ENCODE measurements at regions of chr6 and their contacts with region 1.

Region 1: GRCh38 chr6:5813625-5814027 is 193.1 kb downstream of the NRN1 start:
- DNase-seq: peak; percentile 36
- H3K4me3 Mint-ChIP-seq: no peak overlapping the region
- H3K27ac Mint-ChIP-seq: no peak overlapping the region
- H3K4me1 Mint-ChIP-seq: peaks cover 29% of the 10 kb centered on the region
- H3K27me3 Mint-ChIP-seq: no peaks in the 10 kb centered on the region

Region 2: DNA sequence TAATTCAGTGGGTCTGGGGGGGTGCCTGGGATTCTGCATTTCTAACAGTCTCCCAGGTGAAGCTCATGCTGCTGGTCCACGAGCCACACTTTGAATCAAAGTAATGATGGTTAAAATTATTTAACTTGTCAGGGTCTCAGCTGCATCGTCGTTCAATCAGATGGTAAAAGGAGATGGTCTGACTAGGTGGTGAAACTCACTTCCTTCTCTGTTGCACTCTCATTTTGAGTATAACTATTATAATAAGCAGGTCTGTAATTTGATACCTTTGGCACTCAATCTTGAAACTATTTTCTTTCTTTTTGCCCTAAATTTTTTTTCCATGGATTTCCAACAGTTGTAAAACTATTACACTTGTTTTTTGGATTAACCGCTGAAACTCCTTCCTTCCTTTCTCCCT is 259.9 kb before region 1 on chr6:
- CTCF ChIA-PET with region 1: no interaction called
- intact Hi-C with region 1: no loop called
- DNase-seq: no peak
- H3K4me3 Mint-ChIP-seq: no peak overlapping the region
- H3K27ac Mint-ChIP-seq: no peak overlapping the region
- H3K4me1 Mint-ChIP-seq: peaks cover 2% of the 10 kb centered on the region
- H3K27me3 Mint-ChIP-seq: no peaks in the 10 kb centered on the region

Region 3: DNA sequence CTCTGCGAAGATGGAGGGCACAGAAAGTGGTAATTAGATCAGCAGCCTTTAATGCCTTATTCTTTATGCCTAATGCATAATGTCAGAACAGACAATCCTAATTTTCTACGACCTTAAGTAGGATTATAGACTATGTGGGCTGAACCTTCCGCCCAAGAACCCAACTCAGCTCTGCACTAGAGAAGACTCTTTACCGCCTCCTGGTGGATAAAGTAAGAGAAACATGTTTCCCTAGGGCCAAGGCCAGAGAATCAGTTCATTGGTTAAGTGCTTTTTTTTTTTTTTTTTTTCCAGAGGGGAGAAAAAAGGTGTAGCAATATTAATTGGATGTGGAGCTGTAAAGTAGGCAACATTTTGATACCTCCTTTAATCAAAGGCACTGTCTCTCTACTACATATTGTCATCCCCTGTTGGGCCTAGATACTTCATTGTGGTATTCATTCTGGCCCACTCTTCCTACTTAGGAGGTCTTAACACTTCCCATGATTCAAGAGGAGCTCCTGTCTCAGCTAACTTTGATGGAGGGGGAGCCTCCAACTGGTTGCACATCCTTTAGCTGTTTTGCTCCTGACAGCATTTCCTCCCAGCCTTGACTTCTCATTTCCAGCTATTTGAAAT is 318.0 kb after region 1 on chr6:
- CTCF ChIA-PET with region 1: no interaction called
- intact Hi-C with region 1: loop called (anchors 5 kb)
- DNase-seq: peak; percentile 11
- H3K4me3 Mint-ChIP-seq: no peak overlapping the region
- H3K27ac Mint-ChIP-seq: no peak overlapping the region
- H3K4me1 Mint-ChIP-seq: no peaks in the 10 kb centered on the region
- H3K27me3 Mint-ChIP-seq: no peaks in the 10 kb centered on the region

Region 4: DNA sequence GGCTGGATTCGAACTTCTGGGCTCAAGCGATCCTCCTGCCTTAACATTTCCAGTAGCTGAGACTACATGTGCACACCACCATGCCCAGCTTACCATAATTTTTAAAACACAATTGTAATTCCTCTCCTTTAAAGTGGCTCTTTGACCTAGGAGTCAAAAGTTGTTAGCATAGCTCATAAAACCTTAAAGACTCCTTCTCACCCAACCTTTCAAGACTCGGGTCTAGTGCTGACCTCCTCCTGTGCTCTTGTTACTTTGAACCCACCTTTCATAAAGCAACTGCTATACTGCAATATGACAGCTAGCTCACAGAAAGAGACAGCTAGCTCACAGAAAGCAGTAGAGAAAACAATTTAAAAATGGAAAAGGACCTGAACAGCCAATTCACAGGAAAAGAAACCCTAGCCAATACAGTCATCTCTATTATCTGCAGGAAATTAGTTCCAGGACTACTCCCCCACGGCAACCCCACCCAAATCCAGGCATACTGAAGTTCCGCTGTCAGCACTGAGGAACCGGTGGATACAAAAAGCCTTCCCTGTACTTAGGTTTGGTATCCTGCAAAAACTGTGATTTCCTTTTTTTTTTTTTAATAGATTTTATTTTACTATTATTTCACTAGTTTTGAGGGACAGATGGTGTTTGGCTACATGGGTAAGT is 1479.1 kb after region 1 on chr6:
- CTCF ChIA-PET with region 1: no interaction called
- intact Hi-C with region 1: no loop called
- DNase-seq: no peak
- H3K4me3 Mint-ChIP-seq: no peak overlapping the region
- H3K27ac Mint-ChIP-seq: no peak overlapping the region
- H3K4me1 Mint-ChIP-seq: peaks cover 9% of the 10 kb centered on the region
- H3K27me3 Mint-ChIP-seq: no peaks in the 10 kb centered on the region